ENCODE measurements at regions of chr19 and their contacts with region 1.

Region 1: GRCh38 chr19:42132851-42133528 is 744 bp upstream of the POU2F2 start:
- DNase-seq: peak; percentile 32 to 76 (median 59)
- H3K4me3 ChIP-seq: no peak overlapping the region
- H3K27ac ChIP-seq: no peak overlapping the region
- H3K4me1 ChIP-seq: peaks cover 4% of the 10 kb centered on the region
- H3K27me3 ChIP-seq: no peaks in the 10 kb centered on the region
- CTCF ChIP-seq: peak; percentile 82 to 85 (median 83)
- EP300 ChIP-seq: no peak
- POLR2A ChIP-seq: no peak

Region 2: DNA sequence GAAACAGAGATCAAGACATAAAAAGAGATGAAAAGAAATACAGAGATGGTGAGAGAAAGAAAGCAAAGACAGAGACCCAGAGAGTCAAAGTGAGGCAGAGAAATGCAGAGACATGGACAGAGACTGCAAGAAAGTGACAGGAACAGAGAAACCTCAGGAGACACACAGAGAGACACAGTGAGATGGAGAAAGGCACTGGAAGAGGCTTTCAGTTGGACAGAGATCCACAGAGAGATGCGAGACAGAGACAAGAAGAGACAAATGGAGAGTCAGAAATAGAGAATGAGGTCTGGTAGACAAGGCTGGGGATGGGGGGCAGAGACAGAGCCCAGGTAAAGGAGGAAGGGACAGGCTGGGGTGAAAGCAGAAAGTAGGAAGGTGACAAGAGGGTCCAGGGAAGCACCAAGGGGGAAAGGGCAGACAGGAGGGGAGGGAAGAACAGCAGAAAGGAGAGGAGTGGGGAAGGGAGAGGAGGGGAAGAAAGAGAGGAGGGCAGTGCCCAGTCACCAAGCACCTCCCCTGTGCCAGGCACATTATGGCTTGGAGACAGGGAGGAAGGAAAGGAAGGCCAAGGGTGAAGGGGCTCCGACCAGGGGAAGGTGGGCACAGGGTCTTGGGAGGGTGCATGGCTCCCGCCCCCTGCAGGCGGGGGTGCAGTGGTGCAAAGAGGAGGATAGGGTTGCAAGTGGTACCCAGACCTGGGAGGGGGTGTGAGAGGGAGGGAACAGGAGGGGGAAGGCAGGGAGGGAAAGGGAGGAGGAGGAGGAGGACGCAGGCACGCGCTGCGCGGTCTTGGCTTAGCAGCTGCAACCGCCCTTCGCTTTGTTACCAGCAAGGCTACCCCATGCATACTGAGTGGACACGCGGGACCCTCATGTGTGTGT is 46.0 kb after region 1 on chr19:
- intact Hi-C with region 1: loop called in 3 of 4 experiments (anchors 1 to 10 kb)
- DNase-seq: no peak
- H3K4me3 ChIP-seq: no peak overlapping the region
- H3K27ac ChIP-seq: no peak overlapping the region
- H3K4me1 ChIP-seq: no peaks in the 10 kb centered on the region
- H3K27me3 ChIP-seq: no peaks in the 10 kb centered on the region
- CTCF ChIP-seq: no peak
- EP300 ChIP-seq: no peak
- POLR2A ChIP-seq: no peak

Region 3: DNA sequence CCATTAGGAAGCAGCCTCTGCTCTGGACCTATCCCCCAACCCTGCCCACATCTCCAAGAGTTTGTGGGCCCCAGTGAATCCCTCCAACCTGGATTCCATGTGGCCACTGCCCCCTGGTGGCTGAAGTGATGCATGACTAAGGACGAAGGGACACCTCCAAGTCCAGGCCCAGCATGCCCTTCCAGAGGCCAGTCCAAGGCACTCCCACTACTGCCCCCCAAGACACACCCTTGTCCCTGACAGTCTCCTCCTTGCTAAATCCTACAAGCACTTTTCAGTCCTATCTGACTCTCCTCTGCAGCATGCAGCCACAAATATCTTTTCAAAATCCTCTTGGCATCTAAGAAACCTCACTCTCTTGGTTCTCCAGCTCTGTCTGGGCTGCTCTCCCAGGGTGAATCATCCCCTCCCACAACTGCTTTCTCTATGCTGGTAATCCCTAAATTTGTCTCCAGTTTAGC is 51.4 kb after region 1 on chr19:
- intact Hi-C with region 1: loop called in 3 of 4 experiments (anchors 1 to 10 kb)
- DNase-seq: peak; percentile 55 to 72 (median 66)
- H3K4me3 ChIP-seq: no peak overlapping the region
- H3K27ac ChIP-seq: no peak overlapping the region
- H3K4me1 ChIP-seq: no peaks in the 10 kb centered on the region
- H3K27me3 ChIP-seq: no peaks in the 10 kb centered on the region
- CTCF ChIP-seq: peak; percentile 56 to 76 (median 62)
- EP300 ChIP-seq: no peak
- POLR2A ChIP-seq: no peak

Region 4: GRCh38 chr19:42295831-42296525 is 163.0 kb after region 1 on chr19:
- intact Hi-C with region 1: loop called in 1 of 4 experiments (anchors 5 kb)
- DNase-seq: peak; percentile 78 to 88 (median 87)
- H3K4me3 ChIP-seq: no peak overlapping the region
- H3K27ac ChIP-seq: no peak overlapping the region
- H3K4me1 ChIP-seq: no peaks in the 10 kb centered on the region
- H3K27me3 ChIP-seq: no peaks in the 10 kb centered on the region
- CTCF ChIP-seq: peak; percentile 87 to 93 (median 90)
- EP300 ChIP-seq: no peak
- POLR2A ChIP-seq: no peak

Region 5: DNA sequence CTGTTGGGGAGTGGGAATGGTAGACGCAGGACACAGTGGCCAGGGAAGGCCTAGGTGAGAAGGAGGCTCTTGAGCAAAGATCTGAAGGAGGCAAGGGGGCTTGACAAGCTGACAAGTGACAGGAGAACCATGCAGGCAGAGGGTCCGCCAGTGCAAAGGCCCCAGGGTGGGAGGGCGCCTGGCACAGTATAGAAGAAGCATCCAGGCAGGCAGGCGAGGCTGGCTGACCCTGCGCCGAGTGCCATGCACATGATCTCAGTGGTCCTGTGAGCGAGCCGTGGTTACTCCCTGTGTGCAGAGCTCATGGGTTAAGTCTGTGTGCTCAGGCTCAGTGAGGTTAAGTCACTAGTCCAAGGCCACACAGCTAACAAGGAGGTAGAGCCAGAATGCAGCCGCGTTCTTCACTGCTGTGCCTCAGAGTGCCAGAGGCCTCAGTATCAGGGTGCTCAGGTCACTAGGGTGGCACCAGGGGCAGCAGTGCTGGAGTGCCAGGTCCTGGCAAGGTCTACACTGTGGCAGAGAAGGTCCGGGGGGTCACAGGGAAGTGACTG is 241.9 kb after region 1 on chr19:
- intact Hi-C with region 1: loop called in 1 of 4 experiments (anchors 1 kb)
- DNase-seq: no peak
- H3K4me3 ChIP-seq: no peak overlapping the region
- H3K27ac ChIP-seq: no peak overlapping the region
- H3K4me1 ChIP-seq: no peaks in the 10 kb centered on the region
- H3K27me3 ChIP-seq: no peaks in the 10 kb centered on the region
- CTCF ChIP-seq: no peak
- EP300 ChIP-seq: no peak
- POLR2A ChIP-seq: no peak